ENCODE measurements at regions of chr5 and their contacts with region 1.

Region 1: DNA sequence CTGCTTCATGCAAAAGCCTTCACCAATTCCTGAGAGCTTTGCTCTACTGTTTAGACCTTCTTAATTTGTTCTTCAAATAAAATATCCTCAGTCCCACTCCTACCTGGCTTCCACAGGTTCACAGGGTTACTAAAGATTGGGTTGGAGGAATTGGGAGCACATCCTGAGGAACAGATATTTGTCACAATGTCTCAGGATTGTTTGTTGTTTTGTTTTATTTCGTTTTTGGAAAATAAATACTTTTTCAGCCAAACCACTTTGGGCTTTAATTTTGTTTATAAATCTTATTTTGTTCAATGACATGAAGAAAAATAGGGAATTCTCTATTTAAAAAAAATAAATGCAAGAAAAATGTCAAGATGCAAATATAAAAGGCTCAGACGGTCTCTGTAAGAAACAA is 249.0 kb downstream of the MEF2C start:
- DNase-seq: no peak
- H3K4me3 ChIP-seq: no peak overlapping the region
- H3K27ac ChIP-seq: no peak overlapping the region
- H3K4me1 ChIP-seq: no peaks in the 10 kb centered on the region
- H3K27me3 ChIP-seq: peaks cover 32% of the 10 kb centered on the region
- CTCF ChIP-seq: no peak

Region 2: DNA sequence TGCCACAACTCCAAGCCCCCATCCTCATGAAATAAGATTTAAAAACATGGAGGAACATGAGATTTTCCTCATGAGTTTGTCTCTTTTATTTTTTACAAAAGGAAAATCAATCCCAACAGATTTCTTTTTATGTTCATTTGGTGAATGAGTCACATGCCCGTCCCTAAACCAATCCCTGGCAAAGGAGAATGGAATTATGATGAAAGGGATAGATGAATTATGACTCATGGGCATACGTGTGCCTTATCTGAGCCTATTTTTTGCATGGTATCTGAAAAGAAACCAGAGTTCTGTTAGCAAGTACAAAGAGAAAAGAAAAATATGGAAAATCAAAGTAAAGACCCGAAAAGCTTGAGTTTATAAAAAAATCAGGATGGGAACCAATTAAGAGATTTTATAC is 97.9 kb before region 1 on chr5:
- intact Hi-C with region 1: no loop called
- DNase-seq: no peak
- H3K4me3 ChIP-seq: no peak overlapping the region
- H3K27ac ChIP-seq: no peak overlapping the region
- H3K4me1 ChIP-seq: no peaks in the 10 kb centered on the region
- H3K27me3 ChIP-seq: peaks cover 12% of the 10 kb centered on the region
- CTCF ChIP-seq: no peak

Region 3: GRCh38 chr5:88583471-88583870 is 50.5 kb before region 1 on chr5:
- intact Hi-C with region 1: loop called (anchors 2 kb)
- DNase-seq: no peak
- H3K4me3 ChIP-seq: no peak overlapping the region
- H3K27ac ChIP-seq: no peak overlapping the region
- H3K4me1 ChIP-seq: no peaks in the 10 kb centered on the region
- H3K27me3 ChIP-seq: no peaks in the 10 kb centered on the region
- CTCF ChIP-seq: no peak